Heart right ventricle (tissue), 16 donors: ENCODE measurements at regions of chr12 and their contacts with region 1.

Region 1: GRCh38 chr12:38654980-38655379 is 250.4 kb downstream of the CPNE8 start:
- DNase-seq: no peak
- ATAC-seq: no peak
- H3K4me3 ChIP-seq: no peak overlapping the region
- H3K27ac ChIP-seq: no peak overlapping the region
- H3K4me1 ChIP-seq: no peaks in the 10 kb centered on the region
- H3K27me3 ChIP-seq: no peaks in the 10 kb centered on the region
- CTCF ChIP-seq: no peak

Region 2: DNA sequence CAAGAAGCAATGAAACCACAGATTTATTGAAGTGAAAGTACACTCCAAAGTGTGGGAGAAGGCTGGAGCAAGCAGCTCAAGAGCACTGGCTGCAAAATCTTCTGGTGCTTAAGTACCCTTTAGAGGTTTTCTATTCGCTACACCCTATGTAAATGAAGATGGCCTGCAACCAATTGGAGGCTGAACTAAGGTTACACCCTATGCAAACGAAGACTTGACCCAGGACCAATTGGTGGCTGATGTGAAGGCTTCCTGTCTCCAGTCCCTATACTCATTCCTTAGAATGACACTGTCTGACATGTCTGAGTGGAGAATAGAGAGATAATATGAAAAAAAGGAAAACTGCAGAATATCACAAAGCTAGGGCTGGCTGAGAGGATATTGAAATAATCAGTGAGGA is 281.2 kb before region 1 on chr12:
- intact Hi-C with region 1: no loop called
- DNase-seq: no peak
- ATAC-seq: no peak
- H3K4me3 ChIP-seq: no peak overlapping the region
- H3K27ac ChIP-seq: no peak overlapping the region
- H3K4me1 ChIP-seq: no peaks in the 10 kb centered on the region
- H3K27me3 ChIP-seq: no peaks in the 10 kb centered on the region
- CTCF ChIP-seq: no peak

Region 3: GRCh38 chr12:38610808-38611350 is 44.1 kb before region 1 on chr12:
- intact Hi-C with region 1: no loop called
- DNase-seq: no peak
- ATAC-seq: no peak
- H3K4me3 ChIP-seq: no peak overlapping the region
- H3K27ac ChIP-seq: no peak overlapping the region
- H3K4me1 ChIP-seq: no peaks in the 10 kb centered on the region
- H3K27me3 ChIP-seq: no peaks in the 10 kb centered on the region
- CTCF ChIP-seq: no peak

Region 4: DNA sequence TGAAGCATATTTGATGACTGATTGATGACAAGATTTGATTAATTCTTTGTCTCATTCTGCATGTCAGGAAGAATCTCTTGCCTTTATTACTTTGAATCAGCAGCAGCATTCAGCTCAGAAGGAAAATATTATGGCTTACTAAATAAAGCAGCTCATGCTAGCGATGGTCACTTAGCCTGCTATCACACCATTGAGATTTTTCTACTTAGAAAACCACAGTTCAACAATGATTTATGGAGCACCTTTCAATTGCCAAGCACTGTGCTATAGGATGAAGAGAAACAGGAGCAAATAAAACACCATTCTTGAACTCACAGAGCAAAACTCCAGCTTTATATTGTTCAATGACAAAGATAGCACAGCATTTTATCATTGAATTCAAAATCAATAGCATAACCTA is 52.7 kb after region 1 on chr12:
- intact Hi-C with region 1: loop called in 1 of 10 experiments (anchors 5 kb)
- DNase-seq: no peak
- ATAC-seq: no peak
- H3K4me3 ChIP-seq: no peak overlapping the region
- H3K27ac ChIP-seq: no peak overlapping the region
- H3K4me1 ChIP-seq: no peaks in the 10 kb centered on the region
- H3K27me3 ChIP-seq: no peaks in the 10 kb centered on the region
- CTCF ChIP-seq: no peak